Stomach (tissue), 19 donors: ENCODE measurements at regions of chr17 and their contacts with region 1.

Region 1: GRCh38 chr17:19753049-19753444 is 4.9 kb upstream of the ALDH3A1 start:
- DNase-seq: peak in 1 of 2 donors; percentile 91
- H3K4me3 ChIP-seq: no peak overlapping the region
- H3K27ac ChIP-seq: peak overlapping the region; percentile 72 to 86 (median 82)
- H3K4me1 ChIP-seq: peaks cover 12 to 40% (median 35%) of the 10 kb centered on the region in 4 donors
- H3K27me3 ChIP-seq: peaks cover 0 to 6% (median 0%) of the 10 kb centered on the region in 3 donors
- CTCF ChIP-seq: no peak
- EP300 ChIP-seq: no peak
- POLR2A ChIP-seq: no peak

Region 2: GRCh38 chr17:19513897-19514488 is 239.1 kb before region 1 on chr17:
- intact Hi-C with region 1: loop called (anchors 5 kb)
- DNase-seq: peak; percentile 74 to 88
- H3K4me3 ChIP-seq: no peak overlapping the region
- H3K27ac ChIP-seq: peak overlapping the region in 2 of 5 donors; percentile 46 to 53
- H3K4me1 ChIP-seq: peaks cover 0 to 6% (median 0%) of the 10 kb centered on the region in 4 donors
- H3K27me3 ChIP-seq: no peaks in the 10 kb centered on the region
- CTCF ChIP-seq: peak in 5 of 7 experiments; percentile 72 to 90 (median 83)
- EP300 ChIP-seq: no peak
- POLR2A ChIP-seq: no peak

Region 3: DNA sequence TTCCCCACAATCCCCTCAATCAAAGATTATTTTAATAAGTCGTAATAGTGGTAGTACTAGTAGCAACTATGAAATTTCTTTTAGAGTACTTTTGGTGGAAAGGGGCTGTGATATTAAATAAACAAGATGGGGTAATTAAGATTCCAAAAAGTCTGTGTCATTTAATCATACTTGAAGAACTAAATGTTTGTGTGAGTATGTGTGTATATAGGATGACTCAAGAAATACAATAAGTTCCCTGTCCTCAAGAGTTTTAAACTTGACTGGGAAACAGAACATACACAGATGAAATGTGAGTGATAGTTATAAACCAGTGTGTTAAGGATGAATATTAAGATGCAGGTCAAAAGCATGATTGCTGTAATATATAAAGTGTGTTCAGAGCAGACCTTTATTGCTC is 102.2 kb before region 1 on chr17:
- intact Hi-C with region 1: loop called (anchors 10 kb)
- DNase-seq: no peak
- H3K4me3 ChIP-seq: peak overlapping the region in 2 of 4 donors; percentile 75 to 79
- H3K27ac ChIP-seq: peak overlapping the region in 3 of 5 donors; percentile 39 to 91 (median 46)
- H3K4me1 ChIP-seq: peaks cover 49 to 64% (median 62%) of the 10 kb centered on the region in 4 donors
- H3K27me3 ChIP-seq: no peaks in the 10 kb centered on the region
- CTCF ChIP-seq: no peak
- EP300 ChIP-seq: no peak
- POLR2A ChIP-seq: no peak

Region 4: DNA sequence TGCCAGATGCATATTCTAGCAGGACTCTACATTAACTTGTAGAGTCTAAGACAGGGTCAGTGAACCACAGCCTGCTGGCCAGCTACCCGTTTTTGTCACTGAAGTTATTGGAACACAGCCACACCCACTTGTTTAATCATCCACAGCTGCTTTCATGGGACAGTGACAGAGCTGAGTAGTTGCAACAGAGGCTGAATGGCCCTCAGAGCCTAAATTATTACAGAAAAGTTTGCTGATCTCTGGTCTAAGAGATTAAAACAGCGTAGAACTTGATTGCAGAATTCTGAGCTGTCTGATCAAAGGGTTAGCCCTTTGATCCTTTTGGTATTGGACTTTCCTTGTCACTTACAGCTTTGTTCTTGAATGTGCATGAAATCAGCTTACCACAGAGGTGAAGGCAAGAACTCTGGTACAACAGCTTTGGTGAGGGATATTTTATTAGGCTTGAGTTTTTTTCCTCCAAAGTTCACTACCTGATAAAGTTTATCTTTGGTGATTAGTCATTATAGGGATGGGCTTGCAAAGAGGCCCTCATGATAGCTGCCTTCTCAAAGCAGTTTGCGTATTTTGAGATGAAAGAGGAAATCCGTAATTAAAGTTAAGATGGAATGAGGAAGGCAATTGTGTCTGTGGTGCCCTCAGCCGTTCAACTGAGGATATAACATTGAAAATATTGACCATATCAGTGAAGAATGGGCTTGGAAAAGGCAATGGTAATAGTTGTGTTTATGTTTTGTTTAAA is 80.9 kb before region 1 on chr17:
- intact Hi-C with region 1: no loop called
- DNase-seq: peak; percentile 53 to 62
- H3K4me3 ChIP-seq: no peak overlapping the region
- H3K27ac ChIP-seq: peak overlapping the region; percentile 22 to 76 (median 60)
- H3K4me1 ChIP-seq: peaks cover 9 to 48% (median 32%) of the 10 kb centered on the region in 4 donors
- H3K27me3 ChIP-seq: no peaks in the 10 kb centered on the region
- CTCF ChIP-seq: no peak
- EP300 ChIP-seq: no peak
- POLR2A ChIP-seq: no peak